Motor neuron (in vitro differentiated cells): ENCODE measurements at regions of chr7 and their contacts with region 1.

Region 1: GRCh38 chr7:75054744-75055143 is 18.9 kb downstream of the RCC1L start:
- ATAC-seq: peak in 4 of 8 experiments; percentile 25 to 96 (median 56)
- H3K4me3 ChIP-seq: no peak overlapping the region
- H3K27ac ChIP-seq: no peak overlapping the region
- H3K4me1 ChIP-seq: no peaks in the 10 kb centered on the region

Region 2: DNA sequence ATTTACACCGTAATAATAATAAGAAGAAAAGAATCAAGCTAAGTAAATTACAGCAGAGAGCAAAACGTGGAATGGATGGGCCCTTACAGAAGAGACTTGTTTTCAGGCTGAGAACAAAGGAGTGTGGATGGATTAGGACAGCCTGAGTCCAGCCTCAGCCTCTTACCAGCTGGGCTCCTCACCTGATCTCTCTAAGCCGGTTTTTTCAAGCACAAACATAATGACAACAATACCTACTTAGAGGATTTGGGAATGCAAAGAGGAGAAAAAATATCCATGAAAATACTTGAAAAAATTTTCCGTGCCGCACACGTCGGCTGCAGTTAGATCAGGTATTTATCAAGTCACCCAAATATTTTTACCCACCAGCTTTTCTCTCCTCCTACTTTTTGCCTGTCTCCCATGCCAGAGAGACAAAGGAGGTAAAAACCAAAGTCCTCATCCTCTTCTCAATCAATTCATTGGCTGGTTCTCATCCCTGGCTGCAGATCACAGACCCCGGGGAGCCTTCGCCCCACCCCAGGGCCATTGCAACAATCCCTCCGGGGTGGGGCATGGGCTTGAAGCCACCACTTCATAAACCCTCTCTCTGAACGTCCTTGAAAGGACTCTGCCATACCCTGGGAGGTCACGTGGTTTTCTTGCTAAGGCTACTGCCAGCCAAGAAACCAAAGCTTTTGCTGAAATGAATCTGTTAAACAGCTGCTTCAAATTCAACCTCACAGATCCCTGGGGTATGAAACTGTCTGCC is 426.9 kb before region 1 on chr7:
- in situ Hi-C with region 1: no loop called
- ATAC-seq: peak in 7 of 8 experiments; percentile 27 to 95 (median 91)
- H3K4me3 ChIP-seq: no peak overlapping the region
- H3K27ac ChIP-seq: peak overlapping the region; percentile 38 to 72
- H3K4me1 ChIP-seq: peaks cover 12 to 13% of the 10 kb centered on the region in 2 donors

Region 3: GRCh38 chr7:75688200-75689136 is 633.7 kb after region 1 on chr7:
- in situ Hi-C with region 1: no loop called
- ATAC-seq: peak in 1 of 8 experiments; percentile 10
- H3K4me3 ChIP-seq: no peak overlapping the region
- H3K27ac ChIP-seq: no peak overlapping the region
- H3K4me1 ChIP-seq: no peaks in the 10 kb centered on the region

Region 4: DNA sequence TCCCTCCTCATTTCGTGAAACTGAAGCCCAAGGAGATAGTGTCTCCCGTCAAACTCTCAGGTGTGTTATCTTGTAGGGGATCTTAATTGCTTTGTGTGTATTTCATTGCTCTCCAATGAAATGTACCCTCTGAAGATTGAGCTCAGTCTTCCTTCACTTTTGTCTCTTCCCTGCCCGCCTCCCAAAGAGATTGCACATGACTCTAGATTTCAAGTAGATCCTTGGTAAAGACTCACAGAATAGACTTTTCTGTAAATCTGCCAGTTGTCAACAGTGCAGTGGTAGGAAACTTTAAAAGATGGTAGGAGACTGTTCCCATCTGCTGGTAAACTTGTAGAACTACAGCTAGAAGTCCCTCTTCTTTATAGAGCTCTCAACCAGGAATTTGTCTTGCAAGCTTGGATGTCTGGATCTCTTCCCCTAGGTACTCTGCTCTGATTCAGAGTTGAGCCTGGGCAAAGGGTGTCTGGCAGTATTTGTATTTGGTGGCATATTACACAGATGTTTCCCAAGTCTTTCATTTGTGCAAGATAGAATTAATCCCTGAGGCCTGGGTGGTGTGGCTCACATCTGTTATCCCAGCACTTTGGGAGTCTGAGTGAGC is 707.7 kb after region 1 on chr7:
- in situ Hi-C with region 1: loop called in 1 of 9 experiments (anchors 25 kb)
- ATAC-seq: peak; percentile 86 to 97 (median 93)
- H3K4me3 ChIP-seq: no peak overlapping the region
- H3K27ac ChIP-seq: no peak overlapping the region
- H3K4me1 ChIP-seq: no peaks in the 10 kb centered on the region